Posterior cingulate gyrus (tissue), 11 donors: ENCODE measurements at regions of chr1 and their contacts with region 1.

Region 1: DNA sequence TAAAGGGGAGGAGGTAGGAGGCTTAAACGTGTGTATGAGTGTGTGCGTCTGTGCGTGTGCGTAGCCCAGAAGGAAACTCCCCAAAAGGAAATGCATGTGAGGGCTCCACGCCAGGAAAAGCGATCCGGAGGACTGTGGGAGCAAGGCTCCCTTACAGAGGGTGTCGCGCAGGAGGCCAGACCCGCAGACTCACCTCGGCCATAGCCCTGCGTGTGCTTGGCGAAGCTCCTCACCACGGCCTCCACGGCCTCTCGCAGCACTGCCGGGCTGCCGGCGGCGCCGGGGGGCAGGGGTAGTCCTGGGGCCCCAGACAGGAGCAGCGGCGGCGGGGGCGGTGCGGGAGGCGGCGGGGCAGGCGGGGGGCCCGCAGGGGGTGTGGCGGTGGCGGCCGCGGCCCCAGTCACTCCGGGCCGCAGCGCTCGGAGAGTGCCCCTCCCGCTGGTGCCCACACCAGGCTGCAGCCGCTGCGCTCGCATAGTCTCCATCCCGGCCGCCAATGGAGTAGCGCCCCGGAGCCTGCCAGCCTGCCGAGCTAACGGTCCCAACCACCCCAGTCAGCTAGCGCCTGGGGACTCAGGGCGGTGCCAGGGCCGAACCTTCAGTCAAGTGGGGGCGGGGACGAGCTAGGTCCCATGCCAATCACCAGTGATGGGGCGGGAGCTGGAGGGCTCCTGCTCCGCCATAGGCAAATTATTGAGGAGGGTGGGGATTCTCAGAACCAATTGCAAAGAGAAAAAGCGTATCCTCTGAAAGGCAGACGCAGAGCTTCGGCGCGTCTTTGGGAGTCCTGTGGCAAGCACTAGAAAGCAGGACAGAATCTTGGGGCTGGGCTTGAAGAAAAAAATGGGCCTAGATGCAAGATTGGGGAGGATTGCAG is at the start of gene LIX1L:
- DNase-seq: peak; percentile 95 to 99 (median 97)

Region 2: DNA sequence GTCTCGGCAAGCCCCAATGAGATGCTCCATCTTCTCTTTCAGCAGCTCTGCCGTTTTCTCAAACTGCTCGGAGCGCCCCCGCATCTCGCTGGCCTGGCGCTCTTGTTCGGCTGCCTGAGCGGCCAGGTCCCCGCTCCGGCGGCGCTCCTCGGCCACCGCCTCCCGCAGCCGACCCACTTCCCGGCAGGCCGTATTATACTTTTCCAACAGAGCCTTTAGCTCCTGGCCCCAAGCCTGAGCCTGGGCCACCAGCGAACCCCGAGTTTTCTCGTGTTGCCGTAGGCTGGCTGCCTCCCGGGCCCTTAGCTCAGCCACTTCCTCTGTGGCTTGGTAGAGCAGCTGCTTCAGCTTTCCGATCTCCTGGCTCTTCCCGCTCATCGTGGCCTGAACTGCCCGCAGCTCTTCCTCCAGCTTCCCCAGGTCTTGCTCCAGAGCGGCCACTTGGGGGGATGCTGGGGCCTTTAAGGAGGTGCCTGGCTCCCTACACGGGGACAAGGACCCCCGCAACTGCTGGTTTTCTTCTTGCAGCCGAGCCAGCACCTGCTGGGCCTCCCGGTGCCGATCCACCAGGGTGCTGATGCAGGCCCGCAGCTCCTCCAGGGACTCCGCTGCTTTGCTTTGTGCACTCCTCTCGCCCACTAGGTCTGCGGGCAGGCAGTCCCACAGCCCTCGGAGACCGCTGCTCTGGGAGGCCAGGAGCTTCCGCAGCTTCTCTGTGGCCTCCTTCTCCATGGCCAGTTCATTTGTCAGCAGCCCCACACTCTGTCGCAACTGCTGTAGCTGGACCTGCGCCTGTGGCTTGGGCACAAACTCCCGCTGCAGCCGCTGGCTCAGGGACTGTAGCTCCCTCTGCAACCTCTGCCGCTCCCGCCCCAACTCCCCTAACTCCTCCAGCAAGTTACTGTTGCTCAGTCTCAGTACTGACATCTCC is 85.4 kb before region 1 on chr1:
- intact Hi-C with region 1: no loop called
- DNase-seq: peak; percentile 26 to 91 (median 50)

Region 3: DNA sequence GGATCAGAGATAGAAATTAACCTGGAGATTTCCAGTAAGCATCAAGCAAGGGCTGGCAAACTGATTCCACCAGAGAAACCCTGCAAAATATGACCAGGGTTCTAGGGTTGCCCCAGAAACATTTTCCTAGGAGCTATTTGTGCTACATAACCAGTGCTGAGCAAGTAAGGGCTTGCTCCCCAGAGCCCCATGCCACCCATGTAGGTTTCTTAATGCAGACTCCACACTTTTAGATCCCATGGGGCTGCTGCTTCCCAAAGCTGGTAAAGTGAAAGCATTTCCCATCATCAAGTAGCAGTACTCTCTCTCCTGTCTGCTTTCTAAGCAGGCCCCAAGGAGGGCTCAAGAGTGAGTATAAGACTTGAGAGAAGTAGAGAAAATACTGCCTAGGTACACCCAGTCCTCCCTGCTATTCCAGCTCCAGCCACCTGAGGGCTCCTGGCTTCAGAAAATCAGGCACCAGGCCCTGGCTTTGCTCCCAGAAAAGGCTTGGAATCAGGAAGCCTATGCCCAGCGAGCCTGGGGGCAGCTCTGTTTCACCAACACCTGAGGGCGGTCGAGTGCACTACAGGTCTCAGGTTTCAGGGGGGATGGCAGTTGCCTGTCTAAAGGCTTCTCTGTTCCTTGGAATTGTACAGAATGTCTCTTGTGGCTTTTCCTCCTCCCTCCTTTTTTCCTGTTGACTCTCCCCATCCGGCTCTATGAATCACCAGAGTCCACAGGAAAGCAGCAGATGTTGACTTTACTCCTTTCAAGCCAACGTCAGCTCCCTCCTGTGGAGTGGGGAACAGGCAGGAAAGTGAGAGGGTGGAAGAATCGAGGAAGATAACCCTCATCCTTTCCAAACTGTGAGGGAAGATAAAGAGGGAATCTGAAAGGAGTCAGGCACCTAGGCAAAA is 65.8 kb before region 1 on chr1:
- intact Hi-C with region 1: loop called (anchors 2 kb)
- DNase-seq: peak; percentile 85 to 98 (median 94)

Region 4: GRCh38 chr1:145918144-145918992 is 39.3 kb before region 1 on chr1 and contains the start of gene PEX11B:
- intact Hi-C with region 1: loop called (anchors 2 kb)
- DNase-seq: peak; percentile 85 to 98 (median 91)

Region 5: GRCh38 chr1:145927063-145927886 is 30.4 kb before region 1 on chr1 and contains the start of gene RBM8A:
- intact Hi-C with region 1: loop called (anchors 2 kb)
- DNase-seq: peak; percentile 88 to 99 (median 93)

Region 6: GRCh38 chr1:146012737-146013403 is 55.2 kb after region 1 on chr1:
- intact Hi-C with region 1: no loop called
- DNase-seq: peak in 2 of 10 donors; percentile 40 to 51

Region 7: DNA sequence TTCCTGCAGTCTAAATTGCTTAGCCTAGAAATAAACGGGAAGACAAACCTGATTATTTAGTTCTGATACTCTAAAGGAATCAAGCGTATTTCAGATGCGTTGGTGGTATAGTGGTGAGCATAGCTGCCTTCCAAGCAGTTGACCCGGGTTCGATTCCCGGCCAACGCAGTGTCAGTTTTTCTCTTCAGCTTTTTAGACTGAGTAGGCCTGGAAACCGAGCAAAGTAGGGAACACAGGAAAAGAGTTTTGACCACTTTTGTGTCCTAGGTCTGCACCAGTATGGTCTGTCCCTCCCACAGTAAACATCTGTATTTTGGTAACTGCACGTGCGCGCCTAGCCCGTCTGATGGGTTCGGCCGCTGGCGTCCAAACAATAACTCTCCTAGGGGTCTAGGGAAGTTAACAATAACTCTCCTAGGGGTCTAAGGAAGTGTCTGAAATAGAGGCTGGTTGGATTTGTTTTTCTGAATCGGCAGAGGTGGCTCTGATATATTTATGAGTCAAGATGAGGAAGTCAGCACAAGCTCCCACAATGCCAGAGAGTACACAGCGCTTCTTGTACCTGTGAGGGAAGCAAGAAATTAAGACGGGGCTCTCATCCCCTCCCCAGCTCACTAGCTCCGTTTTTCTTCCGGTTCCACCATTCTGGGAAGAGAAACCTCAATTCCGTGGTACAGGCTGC is 79.4 kb after region 1 on chr1:
- intact Hi-C with region 1: loop called (anchors 5 kb)
- DNase-seq: peak; percentile 71 to 95 (median 76)